Dorsolateral prefrontal cortex (tissue), 120 donors: ENCODE measurements at regions of chr18 and their contacts with region 1.

Region 1: GRCh38 chr18:24362758-24363157 is 34.9 kb downstream of the OSBPL1A start:
- DNase-seq: no peak
- H3K4me3 ChIP-seq: no peak overlapping the region
- H3K27ac ChIP-seq: no peak overlapping the region
- H3K27me3 ChIP-seq: no peaks in the 10 kb centered on the region
- CTCF ChIP-seq: no peak

Region 2: GRCh38 chr18:24176727-24177416 is 185.9 kb before region 1 on chr18:
- intact Hi-C with region 1: loop called in 1 of 2 experiments (anchors 5 kb)
- DNase-seq: peak in 9 of 10 donors; percentile 33 to 81 (median 73)
- H3K4me3 ChIP-seq: no peak overlapping the region
- H3K27ac ChIP-seq: peak overlapping the region in 56 of 59 donors; percentile 25 to 88 (median 74)
- H3K27me3 ChIP-seq: no peaks in the 10 kb centered on the region
- CTCF ChIP-seq: peak; percentile 41 to 91 (median 78)

Region 3: DNA sequence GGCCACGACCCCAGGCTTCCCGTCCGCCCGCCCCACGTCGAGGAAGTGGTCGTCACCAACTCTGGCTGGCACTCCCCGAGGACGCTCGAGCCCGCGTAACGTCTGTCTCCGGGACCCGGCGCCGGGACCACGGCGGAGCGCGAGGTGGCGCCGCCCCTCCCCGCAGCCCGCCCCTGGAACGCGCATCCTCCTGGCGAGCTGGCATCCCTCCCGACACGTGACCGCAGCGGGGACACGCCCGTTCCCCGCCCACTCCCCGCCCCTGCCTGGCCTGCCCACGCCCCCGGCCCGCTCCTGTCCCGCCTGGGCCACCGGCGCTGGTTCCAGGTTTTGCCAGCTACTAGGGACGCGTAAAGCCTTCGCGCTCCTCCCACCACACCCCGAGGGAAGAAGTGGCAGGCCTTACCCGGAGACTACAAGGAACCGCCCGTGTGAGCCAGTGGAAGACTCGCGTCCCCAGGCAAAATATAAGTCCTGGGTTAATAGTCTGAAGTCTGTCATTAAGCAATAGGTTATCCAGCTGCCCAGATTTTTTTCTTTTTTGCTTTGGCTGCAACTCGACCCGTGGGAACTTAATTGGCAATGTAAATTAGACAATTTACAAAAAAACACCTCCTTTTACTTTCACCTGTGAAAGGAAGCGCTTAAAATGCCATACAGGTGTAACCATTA is 35.1 kb after region 1 on chr18 and contains the start of gene OSBPL1A:
- intact Hi-C with region 1: loop called (anchors 2 to 5 kb)
- DNase-seq: peak; percentile 45 to 94 (median 86)
- H3K4me3 ChIP-seq: peak within 1 kb of the TSS; percentile 50 to 91 (median 81)
- H3K27ac ChIP-seq: peak within 1 kb of the TSS; percentile 55 to 99 (median 93)
- H3K27me3 ChIP-seq: no peaks in the 10 kb centered on the region
- CTCF ChIP-seq: peak in 24 of 56 donors; percentile 1 to 52 (median 26)
- total RNA-seq, gene OSBPL1A: 142 to 238 (median 196) TPM

Region 4: GRCh38 chr18:24413148-24413547 is 50.4 kb after region 1 on chr18:
- intact Hi-C with region 1: loop called in 1 of 2 experiments (anchors 5 kb)
- DNase-seq: peak in 1 of 10 donors; percentile 18
- H3K4me3 ChIP-seq: no peak overlapping the region
- H3K27ac ChIP-seq: no peak overlapping the region
- H3K27me3 ChIP-seq: peaks cover 0 to 3% (median 0%) of the 10 kb centered on the region in 45 donors
- CTCF ChIP-seq: peak in 37 of 56 donors; percentile 10 to 56 (median 31)

Region 5: DNA sequence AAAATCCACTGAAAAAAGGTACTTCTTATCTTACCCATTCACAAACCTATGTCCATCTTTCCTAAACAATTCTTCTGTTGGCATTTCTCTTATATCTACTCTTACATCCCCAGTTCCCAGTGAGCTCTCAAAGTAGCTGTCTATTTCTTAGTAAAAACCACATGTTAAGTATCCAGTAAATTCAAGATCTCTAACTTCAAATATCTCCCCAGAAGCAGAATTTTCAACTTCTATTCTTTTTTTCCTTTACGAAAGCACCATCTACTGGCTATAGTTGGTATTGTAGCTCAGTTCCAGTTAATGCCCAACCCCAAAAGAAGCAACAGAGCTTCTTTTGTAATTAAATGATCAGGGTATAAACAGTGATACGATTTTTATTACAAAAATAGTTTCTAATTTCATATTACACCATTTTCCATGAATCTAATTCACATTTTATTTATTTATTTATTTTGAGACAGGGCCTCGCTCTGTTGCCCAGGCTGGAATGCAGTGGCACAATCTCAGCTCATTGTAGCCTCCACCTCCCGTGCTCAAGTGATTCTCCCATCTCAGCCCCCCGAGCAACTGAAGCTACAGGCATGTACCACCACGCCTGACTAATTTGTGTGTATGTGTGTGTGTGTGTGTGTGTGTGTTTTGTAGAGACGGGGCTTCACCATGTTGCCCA is 126.2 kb after region 1 on chr18:
- intact Hi-C with region 1: loop called (anchors 1 to 5 kb)
- DNase-seq: no peak
- H3K4me3 ChIP-seq: no peak overlapping the region
- H3K27ac ChIP-seq: no peak overlapping the region
- H3K27me3 ChIP-seq: no peaks in the 10 kb centered on the region
- CTCF ChIP-seq: peak; percentile 77 to 96 (median 89)

Region 6: GRCh38 chr18:24726727-24727492 is 364.2 kb after region 1 on chr18:
- intact Hi-C with region 1: loop called in 1 of 2 experiments (anchors 5 kb)
- DNase-seq: peak in 9 of 10 donors; percentile 35 to 78 (median 60)
- H3K4me3 ChIP-seq: peak overlapping the region in 54 of 59 donors; percentile 2 to 58 (median 36)
- H3K27ac ChIP-seq: peak overlapping the region in 4 of 59 donors; percentile 8 to 55 (median 44)
- H3K27me3 ChIP-seq: peaks cover 0 to 5% (median 0%) of the 10 kb centered on the region in 45 donors
- CTCF ChIP-seq: peak; percentile 72 to 96 (median 89)